H1 (cell line): ENCODE measurements at regions of chr7 and their contacts with region 1.

Region 1: GRCh38 chr7:139452958-139453672 is 30.4 kb downstream of the KLRG2 start:
- DNase-seq: peak in 1 of 2 experiments; percentile 59
- H3K4me3 ChIP-seq: no peak overlapping the region
- H3K27ac ChIP-seq: no peak overlapping the region
- H3K4me1 ChIP-seq: peaks cover 0 to 9% (median 2%) of the 10 kb centered on the region in 4 experiments; a peak in 2 of 7 replicates
- H3K27me3 ChIP-seq: no peaks in the 10 kb centered on the region
- CTCF ChIP-seq: peak; percentile 54 to 61 (median 58)
- EP300 ChIP-seq: no peak
- POLR2A ChIP-seq: no peak
- RAD21 ChIP-seq: peak in 1 of 2 experiments; percentile 34; a peak in 1 of 4 replicates

Region 2: GRCh38 chr7:139431010-139431409 is 22.1 kb before region 1 on chr7:
- CTCF ChIA-PET with region 1: interaction called, 83 read pairs
- POLR2A ChIA-PET with region 1: interaction called, 4 read pairs
- DNase-seq: no peak
- H3K4me3 ChIP-seq: no peak overlapping the region
- H3K27ac ChIP-seq: no peak overlapping the region
- H3K4me1 ChIP-seq: no peaks in the 10 kb centered on the region; a peak in 1 of 7 replicates
- H3K27me3 ChIP-seq: no peaks in the 10 kb centered on the region
- CTCF ChIP-seq: no peak
- EP300 ChIP-seq: no peak
- POLR2A ChIP-seq: no peak
- RAD21 ChIP-seq: no peak

Region 3: DNA sequence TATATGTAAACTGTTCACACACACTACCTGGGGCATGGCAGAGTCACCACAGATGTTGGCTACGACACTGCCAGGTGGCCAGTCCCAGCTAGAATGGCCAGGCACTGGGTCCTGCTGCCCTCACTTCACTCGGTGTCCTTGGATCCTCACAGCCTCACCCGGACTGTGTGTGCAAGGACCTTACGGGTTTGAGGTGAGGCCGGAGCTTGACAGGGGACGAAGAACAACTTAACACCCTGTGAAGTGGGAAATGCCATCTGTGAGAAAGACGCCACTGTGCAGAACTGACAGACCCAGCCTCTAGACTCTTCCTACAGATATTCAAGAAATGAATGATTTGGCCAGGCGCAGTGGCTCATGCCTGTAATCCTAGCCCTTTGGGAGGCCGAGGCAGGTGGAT is 16.3 kb before region 1 on chr7:
- CTCF ChIA-PET with region 1: interaction called, 83 read pairs
- POLR2A ChIA-PET with region 1: interaction called, 5 read pairs
- DNase-seq: no peak
- H3K4me3 ChIP-seq: no peak overlapping the region
- H3K27ac ChIP-seq: no peak overlapping the region
- H3K4me1 ChIP-seq: no peaks in the 10 kb centered on the region; a peak in 1 of 7 replicates
- H3K27me3 ChIP-seq: no peaks in the 10 kb centered on the region
- CTCF ChIP-seq: no peak
- EP300 ChIP-seq: no peak
- POLR2A ChIP-seq: no peak
- RAD21 ChIP-seq: no peak

Region 4: GRCh38 chr7:139482662-139483469 is 29.8 kb after region 1 on chr7:
- CTCF ChIA-PET with region 1: interaction called, 11 read pairs
- POLR2A ChIA-PET with region 1: interaction called, 6 read pairs
- DNase-seq: peak in 1 of 2 experiments; percentile 73
- H3K4me3 ChIP-seq: peak overlapping the region; percentile 57 to 71 (median 64)
- H3K27ac ChIP-seq: no peak overlapping the region
- H3K4me1 ChIP-seq: peaks cover 0 to 8% (median 4%) of the 10 kb centered on the region in 4 experiments; a peak in 5 of 7 replicates
- H3K27me3 ChIP-seq: peaks cover 0 to 11% (median 5%) of the 10 kb centered on the region in 4 experiments; a peak in 4 of 7 replicates
- CTCF ChIP-seq: no peak
- EP300 ChIP-seq: no peak
- POLR2A ChIP-seq: peak in 1 of 2 experiments; percentile 13; a peak in 1 of 3 replicates
- RAD21 ChIP-seq: no peak

Region 5: DNA sequence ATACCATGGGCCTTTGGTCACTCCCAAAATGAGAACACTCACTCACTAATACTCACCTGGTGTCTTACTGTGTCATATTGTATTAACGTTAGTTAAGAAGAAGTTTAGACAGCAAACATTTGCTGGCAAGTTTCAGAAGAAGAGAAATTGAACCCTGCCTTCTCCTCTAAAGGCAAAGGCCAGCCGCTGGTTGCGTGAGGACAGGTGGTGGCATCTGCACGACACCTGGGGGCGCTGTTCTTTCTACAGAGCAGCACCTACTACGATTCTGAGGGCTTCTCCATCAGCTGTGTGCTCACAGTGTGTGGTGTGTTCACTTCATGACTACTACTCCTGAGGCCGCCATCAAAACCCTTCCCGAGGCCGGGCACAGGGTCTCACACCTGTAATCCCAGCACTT is 52.4 kb after region 1 on chr7:
- CTCF ChIA-PET with region 1: no interaction called
- POLR2A ChIA-PET with region 1: no interaction called
- DNase-seq: peak in 1 of 2 experiments; percentile 81
- H3K4me3 ChIP-seq: no peak overlapping the region
- H3K27ac ChIP-seq: no peak overlapping the region
- H3K4me1 ChIP-seq: peaks cover 0 to 4% (median 0%) of the 10 kb centered on the region in 4 experiments; a peak in 1 of 7 replicates
- H3K27me3 ChIP-seq: no peaks in the 10 kb centered on the region
- CTCF ChIP-seq: peak; percentile 86 to 93 (median 93)
- EP300 ChIP-seq: no peak
- POLR2A ChIP-seq: no peak
- RAD21 ChIP-seq: peak; percentile 78 to 82